ENCODE measurements at regions of chr3 and their contacts with region 1.

Region 1: GRCh38 chr3:14947886-14948555 is 638 bp downstream of the NR2C2 start:
- DNase-seq: peak; percentile 97
- ATAC-seq: peak; percentile 97
- H3K4me3 Mint-ChIP-seq: peak overlapping the region; percentile 91
- H3K27ac Mint-ChIP-seq: peak overlapping the region; percentile 98
- H3K4me1 Mint-ChIP-seq: peaks cover 49% of the 10 kb centered on the region
- H3K27me3 Mint-ChIP-seq: no peaks in the 10 kb centered on the region

Region 2: DNA sequence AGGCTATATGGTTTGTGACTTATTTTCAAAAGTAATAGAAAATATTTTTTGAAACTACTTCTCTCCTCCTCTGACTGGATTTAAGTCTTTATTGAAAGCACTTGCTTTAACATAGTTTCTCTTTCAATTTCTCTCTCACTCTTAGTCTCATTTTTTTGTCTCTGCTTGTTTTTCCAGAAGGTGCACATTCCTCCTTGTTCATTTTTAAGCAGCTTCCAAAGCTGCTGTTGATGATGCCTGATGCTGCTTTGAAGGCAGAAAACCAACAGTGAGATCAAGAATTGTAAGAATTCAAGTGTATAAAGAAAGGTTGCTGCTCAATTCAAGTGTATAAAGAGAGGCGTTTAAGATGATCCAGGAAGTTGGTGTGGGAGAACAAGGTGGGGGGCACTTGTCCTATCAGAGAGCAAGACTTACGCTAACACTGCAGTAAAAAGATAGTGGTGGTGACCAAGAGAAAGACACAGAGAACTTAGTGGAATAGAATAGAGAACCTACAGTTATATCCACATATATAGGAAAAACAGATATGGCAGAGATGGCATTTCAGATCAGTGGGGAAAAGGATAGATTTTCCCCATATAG is 11.4 kb after region 1 on chr3:
- CTCF ChIA-PET with region 1: interaction called, 4 read pairs
- POLR2A ChIA-PET with region 1: interaction called, 4 read pairs
- intact Hi-C with region 1: loop called in 1 of 2 experiments (anchors 1 kb)
- DNase-seq: no peak
- ATAC-seq: peak; percentile 75
- H3K4me3 Mint-ChIP-seq: peak overlapping the region; percentile 61
- H3K27ac Mint-ChIP-seq: peak overlapping the region; percentile 93
- H3K4me1 Mint-ChIP-seq: peaks cover 56% of the 10 kb centered on the region
- H3K27me3 Mint-ChIP-seq: no peaks in the 10 kb centered on the region

Region 3: GRCh38 chr3:15064835-15065549 is 117.0 kb after region 1 on chr3 and contains the start of gene MRPS25:
- CTCF ChIA-PET with region 1: no interaction called
- POLR2A ChIA-PET with region 1: no interaction called
- intact Hi-C with region 1: loop called (anchors 1 to 2 kb)
- DNase-seq: peak; percentile 95
- ATAC-seq: peak; percentile 98
- H3K4me3 Mint-ChIP-seq: peak within 1 kb of the TSS; percentile 96
- H3K27ac Mint-ChIP-seq: peak within 1 kb of the TSS; percentile 96
- H3K4me1 Mint-ChIP-seq: peaks cover 22% of the 10 kb centered on the region
- H3K27me3 Mint-ChIP-seq: no peaks in the 10 kb centered on the region
- total RNA-seq, gene MRPS25: 52.3 to 67.0 TPM

Region 4: DNA sequence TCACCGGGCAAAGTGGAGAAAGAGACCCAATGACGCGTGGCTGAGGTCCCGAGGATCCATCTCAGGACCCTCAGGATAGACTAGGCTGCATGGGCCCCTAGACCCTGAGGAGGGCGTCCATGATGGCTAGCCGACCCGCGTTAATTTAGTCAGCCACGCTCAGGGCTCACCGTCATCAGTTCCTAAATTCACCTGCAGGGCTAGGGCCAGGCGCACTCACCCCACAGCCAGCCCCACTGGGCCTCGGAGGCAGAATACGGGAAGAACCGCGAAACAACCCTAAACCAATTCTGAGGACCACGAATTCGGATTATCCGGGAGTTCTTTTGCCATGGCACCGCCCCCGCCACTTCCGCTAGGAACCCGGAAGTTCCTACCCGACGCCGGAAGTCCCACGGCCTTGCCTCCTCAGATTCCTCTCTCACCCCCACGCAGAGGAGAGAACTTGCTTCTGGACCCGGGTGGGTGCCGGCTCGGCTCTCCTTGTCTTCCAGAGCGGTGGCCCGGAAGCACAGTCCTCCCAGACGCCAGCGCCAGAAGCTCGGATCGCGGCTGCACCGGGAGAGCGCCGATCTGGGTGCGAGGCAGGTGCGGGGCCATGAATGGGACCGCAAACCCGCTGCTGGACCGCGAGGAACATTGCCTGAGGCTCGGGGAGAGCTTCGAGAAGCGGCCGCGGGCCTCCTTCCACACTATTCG is 479.3 kb after region 1 on chr3 and contains the starts of genes EAF1 and METTL6:
- CTCF ChIA-PET with region 1: no interaction called
- POLR2A ChIA-PET with region 1: no interaction called
- intact Hi-C with region 1: loop called in 1 of 2 experiments (anchors 2 kb)
- DNase-seq: peak; percentile 92
- ATAC-seq: peak; percentile 83
- H3K4me3 Mint-ChIP-seq: peak within 1 kb of the TSS; percentile 90
- H3K27ac Mint-ChIP-seq: peak within 1 kb of the TSS; percentile 97
- H3K4me1 Mint-ChIP-seq: peaks cover 45% of the 10 kb centered on the region
- H3K27me3 Mint-ChIP-seq: no peaks in the 10 kb centered on the region
- total RNA-seq, gene EAF1: 21.2 to 25.6 TPM
- total RNA-seq, gene METTL6: 13.0 to 19.5 TPM

Measured in activated CD4-positive, alpha-beta T cell treated with anti-CD3 and anti-CD28 coated beads for 36 hours (primary cell).